ENCODE measurements at regions of chr2 and their contacts with region 1.

Region 1: DNA sequence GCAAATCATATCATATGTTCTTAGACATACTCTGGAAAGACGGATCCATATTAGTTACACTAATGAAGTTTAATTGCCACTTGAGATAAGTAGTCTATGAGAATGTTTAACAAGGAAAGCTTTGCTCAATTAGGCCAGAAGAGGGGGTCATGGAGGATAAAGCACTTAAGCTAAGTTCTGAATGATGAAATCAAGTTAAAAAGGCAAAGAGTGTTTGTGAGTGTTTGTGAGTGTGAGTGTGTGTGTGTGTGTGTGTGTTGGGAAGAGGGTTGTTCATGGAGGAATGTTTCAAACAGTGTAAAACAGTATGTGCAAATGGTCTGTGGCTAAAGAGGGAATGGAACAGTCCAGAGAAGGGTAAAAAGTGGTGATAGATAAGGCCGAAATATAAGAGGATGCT is 360.9 kb downstream of the ERBB4 start:
- DNase-seq: no peak
- ATAC-seq: peak; percentile 63
- H3K4me3 Mint-ChIP-seq: no peak overlapping the region
- H3K27ac Mint-ChIP-seq: no peak overlapping the region
- H3K4me1 Mint-ChIP-seq: no peaks in the 10 kb centered on the region
- H3K27me3 Mint-ChIP-seq: no peaks in the 10 kb centered on the region; the same call in 1 of the 2 replicates
- CTCF ChIP-seq: no peak

Region 2: GRCh38 chr2:212147921-212148513 is 29.7 kb before region 1 on chr2:
- CTCF ChIA-PET with region 1: no interaction called
- POLR2A ChIA-PET with region 1: no interaction called
- DNase-seq: no peak
- ATAC-seq: no peak
- H3K4me3 Mint-ChIP-seq: no peak overlapping the region
- H3K27ac Mint-ChIP-seq: no peak overlapping the region
- H3K4me1 Mint-ChIP-seq: no peaks in the 10 kb centered on the region
- H3K27me3 Mint-ChIP-seq: no peaks in the 10 kb centered on the region
- CTCF ChIP-seq: no peak; the same call in 1 of the 2 replicates

Region 3: DNA sequence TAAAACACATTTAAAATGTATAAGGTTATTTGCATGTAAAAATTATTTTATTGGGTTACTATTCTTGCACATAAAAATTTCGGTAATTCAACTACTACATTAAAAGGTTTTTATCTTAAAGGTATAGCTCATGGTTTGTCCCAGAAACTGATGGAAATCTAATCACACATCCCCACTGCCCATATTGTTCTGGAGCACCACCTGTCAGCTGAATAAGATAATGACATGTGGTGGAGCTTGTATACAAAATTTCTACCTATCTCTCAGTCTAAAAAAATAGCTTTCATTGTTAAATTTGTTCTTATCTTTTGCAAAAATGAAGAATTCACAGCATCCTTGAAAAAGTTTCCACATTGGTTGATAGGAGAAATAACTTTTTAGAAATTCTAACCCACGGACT is 342.6 kb after region 1 on chr2:
- CTCF ChIA-PET with region 1: interaction called, 15 read pairs
- POLR2A ChIA-PET with region 1: no interaction called
- DNase-seq: no peak
- ATAC-seq: peak; percentile 64
- H3K4me3 Mint-ChIP-seq: no peak overlapping the region
- H3K27ac Mint-ChIP-seq: no peak overlapping the region
- H3K4me1 Mint-ChIP-seq: no peaks in the 10 kb centered on the region
- H3K27me3 Mint-ChIP-seq: no peaks in the 10 kb centered on the region
- CTCF ChIP-seq: no peak